Activated naive CD4-positive, alpha-beta T cell treated with anti-CD3 and anti-CD28 coated beads, Interleukin-2, amount 10 ng/mL, durations not matched to agents 7 days and 5 days (primary cell): ENCODE measurements at regions of chr17 and their contacts with region 1.

Region 1: GRCh38 chr17:7989781-7990655 is 12.4 kb upstream of the GUCY2D start:
- DNase-seq: peak; percentile 93
- H3K4me3 Mint-ChIP-seq: peak overlapping the region; percentile 70
- H3K27ac Mint-ChIP-seq: peak overlapping the region; percentile 74
- H3K4me1 Mint-ChIP-seq: peaks cover 35% of the 10 kb centered on the region
- H3K27me3 Mint-ChIP-seq: peaks cover 28% of the 10 kb centered on the region

Region 2: DNA sequence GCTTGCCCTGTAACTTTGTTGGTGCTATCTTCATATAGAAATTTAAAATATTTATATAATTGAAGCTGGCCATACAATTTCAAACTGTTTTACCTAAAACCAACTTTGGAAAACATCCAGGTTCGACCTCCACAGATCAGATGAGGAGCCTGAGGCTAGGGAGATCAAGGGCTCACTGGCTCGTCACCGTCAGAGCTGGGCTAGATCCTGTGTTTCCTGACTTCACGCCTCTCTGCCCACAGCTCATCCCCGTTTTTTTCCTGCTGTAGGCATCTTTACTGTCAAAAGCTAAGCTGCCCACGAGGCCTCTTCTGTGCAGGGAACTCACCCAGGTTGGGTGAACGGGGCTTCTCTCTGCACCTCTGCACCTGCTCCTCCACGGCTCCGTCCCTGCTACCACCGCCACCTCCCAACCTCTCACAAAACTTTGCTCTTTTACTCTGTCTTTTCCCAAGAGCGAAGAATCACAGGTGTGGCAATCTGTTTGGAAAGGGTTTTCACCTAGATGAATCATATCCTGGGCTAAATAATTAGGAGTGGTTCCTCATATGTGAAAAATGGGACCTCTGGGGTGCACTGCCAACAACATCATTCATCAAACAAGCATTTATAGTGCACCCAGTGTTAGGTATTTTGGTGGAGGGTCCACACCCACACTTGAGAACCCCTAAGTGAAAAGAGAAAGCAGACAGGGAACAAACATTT is 180.8 kb before region 1 on chr17:
- CTCF ChIA-PET with region 1: no interaction called
- DNase-seq: no peak
- H3K4me3 Mint-ChIP-seq: no peak overlapping the region
- H3K27ac Mint-ChIP-seq: no peak overlapping the region
- H3K4me1 Mint-ChIP-seq: no peaks in the 10 kb centered on the region
- H3K27me3 Mint-ChIP-seq: peaks cover 48% of the 10 kb centered on the region

Region 3: DNA sequence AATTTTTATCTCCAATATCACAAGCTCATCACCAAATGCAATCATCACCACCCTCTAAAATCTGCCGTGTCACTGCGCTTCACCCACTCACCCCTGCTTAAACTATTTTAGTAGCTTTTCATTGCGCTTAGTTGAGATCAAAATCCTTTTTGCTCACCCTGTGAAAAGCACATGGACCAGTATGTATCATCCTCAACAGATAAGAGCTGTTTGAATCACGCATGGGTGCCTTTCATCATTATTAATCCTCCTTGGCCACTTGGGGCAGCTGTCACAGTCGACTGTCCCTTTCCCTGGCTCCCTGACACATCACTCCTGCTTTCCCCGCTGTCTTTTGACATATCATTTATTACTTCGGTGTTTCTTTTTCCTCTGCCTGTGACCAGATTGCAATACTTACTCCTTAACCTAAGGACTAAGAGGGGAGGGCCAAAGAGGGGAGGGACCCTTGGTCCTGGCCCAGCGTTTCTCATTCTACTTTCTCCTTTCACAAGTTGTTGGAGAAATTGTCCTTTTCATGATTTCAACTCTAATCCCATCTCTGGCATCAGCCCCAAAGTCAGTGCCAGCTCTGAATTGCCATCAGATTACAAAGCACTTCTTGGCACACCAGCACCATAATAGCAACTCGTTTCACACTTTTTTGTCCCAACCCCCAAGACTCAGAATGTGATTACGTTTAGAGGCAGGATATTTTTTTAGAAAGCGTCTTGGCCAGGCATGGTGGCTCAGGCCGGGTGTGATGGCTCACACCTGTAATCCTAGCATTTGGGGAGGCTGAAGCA is 164.6 kb before region 1 on chr17:
- CTCF ChIA-PET with region 1: interaction called, 12 read pairs
- DNase-seq: no peak
- H3K4me3 Mint-ChIP-seq: no peak overlapping the region
- H3K27ac Mint-ChIP-seq: no peak overlapping the region
- H3K4me1 Mint-ChIP-seq: no peaks in the 10 kb centered on the region
- H3K27me3 Mint-ChIP-seq: peaks cover 50% of the 10 kb centered on the region

Region 4: GRCh38 chr17:7856883-7857723 is 132.9 kb before region 1 on chr17 and contains the start of gene NAA38:
- CTCF ChIA-PET with region 1: interaction called, 120 read pairs
- DNase-seq: peak; percentile 98
- H3K4me3 Mint-ChIP-seq: no peak within 1 kb of the TSS
- H3K27ac Mint-ChIP-seq: no peak within 1 kb of the TSS
- H3K4me1 Mint-ChIP-seq: peaks cover 10% of the 10 kb centered on the region
- H3K27me3 Mint-ChIP-seq: no peaks in the 10 kb centered on the region

Region 5: DNA sequence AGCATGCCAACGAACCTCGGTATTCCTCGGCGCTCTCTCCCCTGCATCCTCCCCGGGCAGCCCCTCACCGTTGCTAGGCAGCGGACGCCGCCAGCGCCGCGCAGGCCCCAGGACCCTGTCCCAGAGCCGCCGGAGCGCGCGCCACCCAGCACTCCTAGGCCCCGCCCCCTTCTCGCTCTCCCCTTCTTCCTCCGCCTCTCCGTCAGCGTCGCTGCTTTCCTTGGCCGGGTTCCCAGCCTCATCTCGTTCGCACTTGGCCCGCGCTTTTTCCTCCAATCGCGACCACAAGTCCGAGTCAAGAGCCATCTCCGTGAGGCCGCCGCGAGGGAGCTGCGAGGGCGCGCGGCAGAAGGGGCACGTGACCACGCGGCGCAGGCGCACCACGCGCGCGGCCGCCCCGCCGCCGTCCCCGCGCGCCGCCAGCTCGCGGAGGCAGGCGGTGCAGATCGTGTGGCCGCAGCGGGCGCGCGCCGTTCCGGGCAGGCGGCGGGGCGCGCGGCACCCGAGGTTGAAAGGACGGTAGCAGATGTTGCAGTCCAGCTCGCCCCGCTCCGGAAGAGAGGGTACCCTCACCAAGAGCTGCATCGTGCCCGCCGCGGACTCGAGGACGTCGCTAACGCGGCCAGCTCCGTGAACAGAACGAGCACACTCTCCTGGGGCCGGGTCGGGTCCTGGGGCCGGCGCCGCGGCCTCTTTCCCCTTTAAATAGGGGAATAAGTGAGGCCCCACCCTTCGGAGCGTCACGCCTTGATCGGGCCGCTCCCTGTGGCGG is 74.2 kb before region 1 on chr17 and contains the start of gene RNF227:
- CTCF ChIA-PET with region 1: interaction called, 71 read pairs
- DNase-seq: peak; percentile 89
- H3K4me3 Mint-ChIP-seq: peak within 1 kb of the TSS; percentile 87
- H3K27ac Mint-ChIP-seq: peak within 1 kb of the TSS; percentile 94
- H3K4me1 Mint-ChIP-seq: peaks cover 43% of the 10 kb centered on the region
- H3K27me3 Mint-ChIP-seq: peaks cover 4% of the 10 kb centered on the region

Region 6: GRCh38 chr17:7931709-7932482 is 58.1 kb before region 1 on chr17 and contains the starts of genes CNTROB and TRAPPC1:
- CTCF ChIA-PET with region 1: interaction called, 33 read pairs
- DNase-seq: peak; percentile 100
- H3K4me3 Mint-ChIP-seq: peak within 1 kb of the TSS; percentile 91
- H3K27ac Mint-ChIP-seq: peak within 1 kb of the TSS; percentile 95
- H3K4me1 Mint-ChIP-seq: peaks cover 52% of the 10 kb centered on the region
- H3K27me3 Mint-ChIP-seq: no peaks in the 10 kb centered on the region

Region 7: DNA sequence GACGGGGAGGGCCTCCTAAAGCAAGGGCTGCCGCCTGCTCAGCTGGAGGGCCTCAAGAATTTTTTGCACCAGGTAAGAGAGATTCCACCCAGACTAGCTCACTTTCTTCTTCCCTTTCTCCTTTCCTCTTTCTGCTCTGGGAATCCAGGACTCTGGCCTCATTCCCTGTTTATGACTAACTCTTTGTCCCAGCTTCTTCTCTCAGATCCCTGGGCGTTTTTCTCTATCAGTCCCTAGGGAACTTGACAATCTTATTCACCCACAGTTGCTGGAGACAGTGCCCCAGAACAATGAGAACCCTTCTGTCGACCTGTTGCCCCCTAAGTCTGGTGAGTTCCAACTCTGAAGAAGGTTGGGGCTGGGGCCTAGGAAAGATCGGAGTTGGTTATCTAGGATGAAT is 42.4 kb before region 1 on chr17:
- CTCF ChIA-PET with region 1: interaction called, 14 read pairs
- DNase-seq: no peak
- H3K4me3 Mint-ChIP-seq: no peak overlapping the region
- H3K27ac Mint-ChIP-seq: no peak overlapping the region
- H3K4me1 Mint-ChIP-seq: peaks cover 34% of the 10 kb centered on the region
- H3K27me3 Mint-ChIP-seq: no peaks in the 10 kb centered on the region

Region 8: DNA sequence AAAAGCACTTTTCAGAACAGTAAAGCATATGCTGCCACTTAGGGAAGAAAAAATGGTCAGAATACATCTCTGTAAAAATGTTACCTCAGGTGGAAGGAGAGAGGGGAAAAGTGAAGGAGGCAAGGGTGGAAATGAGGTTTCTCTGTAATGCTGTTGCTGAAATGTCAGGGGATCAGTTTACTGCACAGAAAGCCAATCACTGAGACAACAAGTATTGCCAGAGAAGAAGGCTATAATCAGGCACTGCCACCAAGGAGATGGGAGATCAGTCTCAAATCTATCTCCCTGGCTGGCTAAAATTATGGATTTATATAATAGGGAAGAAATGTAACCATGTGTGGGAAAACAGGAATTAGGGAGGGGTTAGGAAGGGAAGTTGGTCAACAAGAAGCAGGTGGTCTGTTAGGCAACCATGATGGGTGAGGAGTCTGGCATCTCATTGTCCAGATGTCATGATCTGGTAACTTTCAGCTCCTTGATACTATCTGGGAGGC is 15.3 kb before region 1 on chr17:
- CTCF ChIA-PET with region 1: interaction called, 11 read pairs
- DNase-seq: no peak
- H3K4me3 Mint-ChIP-seq: no peak overlapping the region
- H3K27ac Mint-ChIP-seq: no peak overlapping the region
- H3K4me1 Mint-ChIP-seq: peaks cover 2% of the 10 kb centered on the region
- H3K27me3 Mint-ChIP-seq: peaks cover 21% of the 10 kb centered on the region